Activated B cell treated with CpG ODN at 0.5 μM for 24 hours (primary cell): ENCODE measurements at regions of chr20 and their contacts with region 1.

Region 1: DNA sequence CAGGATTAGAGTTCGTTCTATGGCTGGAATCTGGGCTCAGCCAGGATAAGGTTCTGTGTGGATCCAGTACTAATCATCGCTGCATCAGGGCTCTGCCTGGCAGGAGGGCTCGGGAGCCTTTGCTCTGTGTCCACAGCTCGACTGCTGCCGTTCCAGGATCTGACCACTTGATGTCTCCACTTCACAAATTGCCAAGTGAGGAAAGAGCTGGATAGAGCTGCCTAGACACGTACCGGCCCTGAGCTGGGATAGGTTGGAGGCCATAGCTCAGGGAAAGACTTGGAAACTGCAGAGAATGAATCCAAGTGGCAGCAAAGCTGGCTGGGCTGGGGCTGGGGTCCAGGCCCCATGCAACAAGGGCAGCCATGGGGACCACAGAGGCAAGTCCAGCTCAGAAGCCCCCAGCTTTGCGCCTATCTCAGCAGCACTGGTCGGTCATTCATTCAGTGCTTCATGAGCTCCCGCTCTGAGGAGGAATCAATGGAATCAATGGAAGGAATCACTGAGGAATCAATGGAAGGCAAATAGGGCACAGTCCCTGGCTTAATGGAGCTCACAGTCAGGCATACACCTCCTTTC is 38.0 kb upstream of the TOP1 start:
- DNase-seq: peak; percentile 38
- ATAC-seq: peak; percentile 35
- H3K4me3 Mint-ChIP-seq: peak overlapping the region; percentile 72
- H3K27ac Mint-ChIP-seq: peak overlapping the region; percentile 96
- H3K4me1 Mint-ChIP-seq: peaks cover 52% of the 10 kb centered on the region
- H3K27me3 Mint-ChIP-seq: no peaks in the 10 kb centered on the region
- CTCF ChIP-seq: no peak

Region 2: DNA sequence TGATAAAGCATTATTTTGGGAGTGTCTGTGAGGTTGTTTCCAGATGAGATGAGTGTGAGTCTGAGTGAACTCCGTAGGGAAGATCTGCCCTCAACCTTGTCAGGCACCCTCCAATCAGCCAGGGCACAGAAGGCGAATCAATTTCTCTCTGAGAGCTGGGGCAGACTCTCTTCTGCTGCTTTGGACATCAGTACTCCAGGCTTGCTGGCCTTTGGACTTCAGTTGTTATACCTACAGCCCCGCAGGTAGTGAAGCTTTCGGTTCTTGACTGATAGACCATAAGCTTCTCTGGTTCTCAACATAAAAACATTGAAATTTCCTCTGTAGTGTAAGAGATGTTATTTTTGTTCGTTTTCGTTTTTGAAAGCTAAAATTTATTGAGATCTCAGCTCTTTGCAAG is 373.0 kb before region 1 on chr20:
- CTCF ChIA-PET with region 1: no interaction called
- POLR2A ChIA-PET with region 1: no interaction called
- intact Hi-C with region 1: no loop called
- DNase-seq: no peak
- ATAC-seq: no peak
- H3K4me3 Mint-ChIP-seq: no peak overlapping the region
- H3K27ac Mint-ChIP-seq: no peak overlapping the region
- H3K4me1 Mint-ChIP-seq: no peaks in the 10 kb centered on the region
- H3K27me3 Mint-ChIP-seq: peaks cover 8% of the 10 kb centered on the region
- CTCF ChIP-seq: no peak

Region 3: GRCh38 chr20:40962730-40963504 is 27.7 kb before region 1 on chr20:
- CTCF ChIA-PET with region 1: interaction called, 35 read pairs
- POLR2A ChIA-PET with region 1: interaction called, 5 read pairs
- intact Hi-C with region 1: loop called (anchors 1 kb)
- DNase-seq: peak; percentile 61
- ATAC-seq: peak; percentile 81
- H3K4me3 Mint-ChIP-seq: no peak overlapping the region
- H3K27ac Mint-ChIP-seq: no peak overlapping the region
- H3K4me1 Mint-ChIP-seq: peaks cover 5% of the 10 kb centered on the region
- H3K27me3 Mint-ChIP-seq: peaks cover 5% of the 10 kb centered on the region
- CTCF ChIP-seq: peak; percentile 52

Region 4: GRCh38 chr20:41011551-41012067 is 21.0 kb after region 1 on chr20:
- CTCF ChIA-PET with region 1: interaction called, 45 read pairs
- POLR2A ChIA-PET with region 1: interaction called, 148 read pairs
- intact Hi-C with region 1: loop called (anchors 1 kb)
- DNase-seq: peak; percentile 40
- ATAC-seq: peak; percentile 94
- H3K4me3 Mint-ChIP-seq: peak overlapping the region; percentile 70
- H3K27ac Mint-ChIP-seq: peak overlapping the region; percentile 84
- H3K4me1 Mint-ChIP-seq: peaks cover 49% of the 10 kb centered on the region
- H3K27me3 Mint-ChIP-seq: no peaks in the 10 kb centered on the region
- CTCF ChIP-seq: no peak

Region 5: DNA sequence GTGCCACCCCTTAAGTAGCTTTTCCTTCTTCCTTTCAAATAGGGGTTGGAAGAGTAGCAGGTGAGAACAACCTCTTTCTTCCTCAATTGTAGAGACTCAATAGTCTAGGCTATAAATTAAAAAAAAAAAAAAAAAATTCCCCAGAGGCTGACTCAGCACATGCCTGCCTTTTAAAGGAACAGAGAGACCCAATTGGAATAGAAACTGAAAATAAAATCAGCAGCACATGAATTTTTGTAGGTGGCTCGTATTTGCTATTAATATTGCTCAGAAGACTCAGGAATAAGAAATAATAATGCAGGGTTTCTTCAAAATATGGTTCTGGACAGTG is 57.3 kb after region 1 on chr20:
- CTCF ChIA-PET with region 1: interaction called, 39 read pairs
- POLR2A ChIA-PET with region 1: interaction called, 22 read pairs
- intact Hi-C with region 1: loop called (anchors 1 kb)
- DNase-seq: no peak
- ATAC-seq: peak; percentile 76
- H3K4me3 Mint-ChIP-seq: peak overlapping the region; percentile 73
- H3K27ac Mint-ChIP-seq: peak overlapping the region; percentile 80
- H3K4me1 Mint-ChIP-seq: peaks cover 85% of the 10 kb centered on the region
- H3K27me3 Mint-ChIP-seq: no peaks in the 10 kb centered on the region
- CTCF ChIP-seq: no peak

Region 6: DNA sequence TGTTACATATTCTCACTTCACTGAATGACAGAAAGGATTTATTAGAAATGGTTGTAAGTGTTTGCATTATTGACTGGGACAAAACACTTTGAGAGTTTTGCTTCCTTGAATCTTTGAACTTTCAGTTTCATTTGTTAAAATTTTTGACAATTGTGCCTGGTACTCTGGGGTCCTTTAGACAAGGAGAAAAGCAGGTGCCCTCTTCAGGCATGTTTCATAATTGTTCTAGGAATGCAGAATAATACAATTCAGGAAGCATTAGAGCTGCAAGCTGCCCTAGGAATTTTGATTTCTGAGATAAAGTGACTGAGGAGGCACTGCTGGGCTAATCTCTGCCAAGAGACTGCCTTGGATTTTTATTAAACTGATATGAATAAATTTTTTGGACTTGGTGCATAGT is 87.7 kb after region 1 on chr20:
- CTCF ChIA-PET with region 1: interaction called, 26 read pairs
- POLR2A ChIA-PET with region 1: interaction called, 16 read pairs
- intact Hi-C with region 1: loop called (anchors 1 kb)
- DNase-seq: no peak
- ATAC-seq: peak; percentile 68
- H3K4me3 Mint-ChIP-seq: no peak overlapping the region
- H3K27ac Mint-ChIP-seq: no peak overlapping the region
- H3K4me1 Mint-ChIP-seq: peaks cover 34% of the 10 kb centered on the region
- H3K27me3 Mint-ChIP-seq: no peaks in the 10 kb centered on the region
- CTCF ChIP-seq: no peak